MCF 10A (cell line): ENCODE measurements at regions of chr19 and their contacts with region 1.

Region 1: DNA sequence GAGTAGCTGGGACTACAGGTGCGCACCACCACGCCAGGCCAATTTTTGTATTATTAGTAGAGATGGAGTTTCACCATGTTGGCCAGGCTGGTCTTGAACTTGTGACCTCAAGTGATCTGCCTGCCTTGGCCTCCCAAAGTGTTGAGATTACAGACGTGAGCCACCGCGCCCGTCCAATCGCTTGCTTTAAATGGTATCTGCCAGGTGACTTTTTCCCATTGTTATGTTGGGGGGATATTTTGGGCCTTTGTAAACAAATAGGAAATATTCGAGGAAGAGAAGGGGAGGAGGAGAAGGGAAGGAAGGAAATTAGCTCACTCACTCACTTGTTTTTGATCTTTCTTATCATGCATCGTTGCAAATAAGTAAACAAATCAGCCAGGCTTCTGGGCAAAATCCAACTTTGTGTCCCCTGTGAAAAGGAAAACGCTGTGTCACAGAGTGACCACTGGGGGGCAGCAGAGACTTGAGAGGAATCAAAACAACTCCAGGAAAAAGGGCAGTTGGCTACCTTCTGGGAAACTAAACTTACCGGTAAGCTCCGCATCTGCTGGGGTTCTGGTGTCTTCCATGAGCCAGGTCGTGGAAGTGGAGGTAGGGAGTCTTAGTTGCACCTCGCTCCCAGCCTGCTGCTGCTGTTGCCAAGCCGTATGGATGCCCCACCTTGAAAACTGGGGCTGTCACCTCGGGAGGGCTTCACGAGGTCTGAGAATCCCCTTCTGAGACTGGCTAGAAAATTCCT is 9.3 kb upstream of the RANBP3 start:
- DNase-seq: peak; percentile 84
- H3K4me3 Mint-ChIP-seq: peak overlapping the region; percentile 47
- H3K27ac Mint-ChIP-seq: no peak overlapping the region
- H3K4me1 Mint-ChIP-seq: peaks cover 14% of the 10 kb centered on the region
- H3K27me3 Mint-ChIP-seq: no peaks in the 10 kb centered on the region
- CTCF ChIP-seq: peak; percentile 89

Region 2: GRCh38 chr19:6011794-6012193 is 24.5 kb after region 1 on chr19:
- CTCF ChIA-PET with region 1: interaction called, 12 read pairs
- POLR2A ChIA-PET with region 1: interaction called, 3 read pairs
- intact Hi-C with region 1: no loop called
- DNase-seq: no peak
- H3K4me3 Mint-ChIP-seq: no peak overlapping the region
- H3K27ac Mint-ChIP-seq: no peak overlapping the region
- H3K4me1 Mint-ChIP-seq: no peaks in the 10 kb centered on the region
- H3K27me3 Mint-ChIP-seq: no peaks in the 10 kb centered on the region
- CTCF ChIP-seq: no peak

Region 3: DNA sequence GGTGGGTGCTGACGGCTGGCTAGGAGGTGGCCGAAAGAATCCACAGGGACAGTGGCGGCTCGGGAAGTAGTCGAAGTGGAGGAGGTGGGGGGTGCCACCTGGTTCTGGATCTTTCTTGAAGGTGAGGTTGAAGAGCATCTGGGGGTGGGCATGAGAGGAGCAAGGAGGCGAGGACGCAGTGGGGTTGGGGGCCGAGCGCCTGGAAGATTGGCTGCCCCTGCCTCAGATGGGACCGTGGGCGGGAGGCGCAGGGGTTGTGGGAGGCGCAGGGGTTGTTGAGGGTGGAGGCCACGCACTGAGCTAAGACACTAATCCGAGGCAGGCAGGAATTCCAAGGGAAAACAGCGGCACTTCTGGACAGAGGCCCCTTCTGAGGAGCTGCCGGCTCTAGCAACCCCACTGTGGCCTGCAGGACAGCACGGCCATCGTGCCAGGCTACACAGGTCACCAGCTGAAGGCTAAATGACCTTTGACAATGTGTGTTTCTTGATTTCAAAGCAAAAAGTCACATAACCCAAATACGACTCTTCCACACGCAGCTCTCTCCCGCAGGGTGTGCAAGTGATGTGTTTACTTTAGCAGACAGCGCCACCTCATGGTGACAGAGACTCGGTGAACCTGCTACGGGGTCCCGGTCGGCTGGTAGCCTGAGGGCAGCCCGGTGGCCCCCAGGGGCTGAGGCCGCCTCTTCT is 34.8 kb after region 1 on chr19:
- CTCF ChIA-PET with region 1: interaction called, 6 read pairs
- POLR2A ChIA-PET with region 1: interaction called, 3 read pairs
- intact Hi-C with region 1: loop called (anchors 1 kb)
- DNase-seq: peak; percentile 74
- H3K4me3 Mint-ChIP-seq: no peak overlapping the region
- H3K27ac Mint-ChIP-seq: peak overlapping the region; percentile 24
- H3K4me1 Mint-ChIP-seq: no peaks in the 10 kb centered on the region
- H3K27me3 Mint-ChIP-seq: no peaks in the 10 kb centered on the region
- CTCF ChIP-seq: peak; percentile 49